ENCODE measurements at regions of chr6 and their contacts with region 1.

Region 1: DNA sequence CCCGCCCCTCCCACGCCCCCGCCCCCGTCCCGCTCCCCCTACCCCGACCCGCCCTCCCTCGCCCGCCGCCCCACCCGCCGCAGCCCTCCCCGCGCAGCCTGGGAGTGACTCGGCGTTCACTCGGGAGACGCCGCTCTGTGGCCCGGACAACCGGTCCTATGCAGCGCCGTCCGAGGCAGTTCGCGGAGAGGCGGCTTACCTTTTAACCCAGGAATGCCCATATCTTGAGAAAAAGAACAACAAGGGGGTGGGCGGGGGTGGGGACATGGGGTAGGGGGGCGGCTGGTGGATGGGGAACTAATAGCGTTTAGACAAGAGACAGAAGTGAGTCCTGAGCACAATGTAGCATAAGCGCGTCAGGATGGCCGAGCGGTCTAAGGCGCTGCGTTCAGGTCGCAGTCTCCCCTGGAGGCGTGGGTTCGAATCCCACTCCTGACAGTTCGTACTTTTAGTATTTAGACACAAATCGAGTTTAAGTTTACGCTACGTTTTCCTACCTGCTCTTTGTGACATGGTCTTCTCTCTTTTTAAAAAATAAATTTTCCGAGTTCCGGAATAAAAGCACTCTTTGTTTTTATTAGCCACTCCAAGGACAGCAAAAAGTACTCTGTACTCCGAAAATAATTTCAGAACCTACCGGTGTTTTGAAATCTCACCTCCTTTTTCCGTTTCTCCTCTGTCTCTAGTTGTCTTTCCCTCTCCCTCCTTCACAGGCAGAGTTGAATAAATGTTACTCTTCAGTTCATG is 17.1 kb upstream of the HMGN4 start:
- DNase-seq: peak; percentile 78
- ATAC-seq: peak; percentile 72
- H3K4me3 Mint-ChIP-seq: peak overlapping the region; percentile 87
- H3K27ac Mint-ChIP-seq: peak overlapping the region; percentile 92
- H3K4me1 Mint-ChIP-seq: peaks cover 43% of the 10 kb centered on the region
- H3K27me3 Mint-ChIP-seq: peaks cover 1% of the 10 kb centered on the region
- CTCF ChIP-seq: no peak

Region 2: GRCh38 chr6:26401987-26402658 is 118.9 kb before region 1 on chr6 and contains the start of gene BTN3A1:
- CTCF ChIA-PET with region 1: no interaction called
- POLR2A ChIA-PET with region 1: no interaction called
- intact Hi-C with region 1: loop called (anchors 5 kb)
- DNase-seq: peak; percentile 43
- ATAC-seq: peak; percentile 87
- H3K4me3 Mint-ChIP-seq: peak within 1 kb of the TSS; percentile 98
- H3K27ac Mint-ChIP-seq: peak within 1 kb of the TSS; percentile 98
- H3K4me1 Mint-ChIP-seq: peaks cover 65% of the 10 kb centered on the region
- H3K27me3 Mint-ChIP-seq: no peaks in the 10 kb centered on the region
- CTCF ChIP-seq: no peak
- total RNA-seq, gene BTN3A1: 55.4 and 61.7 TPM in 2 replicates

Region 3: GRCh38 chr6:26447257-26447656 is 73.8 kb before region 1 on chr6:
- CTCF ChIA-PET with region 1: no interaction called
- POLR2A ChIA-PET with region 1: no interaction called
- intact Hi-C with region 1: no loop called
- DNase-seq: no peak
- ATAC-seq: no peak
- H3K4me3 Mint-ChIP-seq: no peak overlapping the region
- H3K27ac Mint-ChIP-seq: no peak overlapping the region
- H3K4me1 Mint-ChIP-seq: peaks cover 36% of the 10 kb centered on the region
- H3K27me3 Mint-ChIP-seq: no peaks in the 10 kb centered on the region
- CTCF ChIP-seq: no peak

Region 4: DNA sequence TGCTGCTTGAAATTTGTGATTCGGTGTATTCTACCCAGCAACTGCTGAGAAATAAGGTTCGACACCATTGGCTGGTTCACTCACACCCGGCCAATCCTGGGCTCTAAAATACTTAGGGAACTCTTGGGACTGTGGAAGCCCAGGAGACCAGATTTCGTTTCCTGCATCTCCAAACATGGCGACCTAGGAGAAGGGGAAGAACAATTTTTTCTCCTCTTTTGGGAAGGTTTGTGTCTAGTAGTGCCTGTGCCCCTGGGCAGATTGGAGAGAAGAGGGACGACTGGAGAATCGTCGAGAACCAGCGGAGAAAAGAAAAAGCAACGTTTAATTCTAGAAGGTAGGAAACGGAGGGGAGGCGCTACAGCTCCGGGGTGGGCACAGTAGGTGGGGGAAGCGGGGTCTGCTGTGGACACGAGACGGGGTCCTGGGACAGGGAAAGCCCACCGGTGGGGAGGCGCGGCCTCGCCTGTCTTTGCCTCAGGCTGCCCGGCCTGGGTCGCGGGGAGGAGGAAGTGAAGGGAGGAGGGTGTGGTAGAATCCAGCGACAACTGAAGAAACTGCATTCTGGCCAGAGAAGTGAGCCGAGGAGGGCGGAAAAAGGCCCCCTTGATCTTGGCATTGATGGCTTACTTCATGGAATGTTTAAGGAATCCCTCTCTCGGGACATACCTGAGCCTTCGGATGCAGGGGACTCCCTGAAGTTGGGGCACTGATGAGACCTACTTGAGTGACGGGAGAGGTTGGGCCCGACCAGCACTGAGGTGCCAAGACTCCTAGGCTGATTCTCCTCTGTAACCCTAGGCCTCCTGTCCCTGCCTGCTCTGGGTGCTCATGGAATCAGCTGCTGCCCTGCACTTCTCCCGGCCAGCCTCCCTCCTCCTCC is 63.0 kb before region 1 on chr6 and contains the start of gene BTN2A1:
- CTCF ChIA-PET with region 1: no interaction called
- POLR2A ChIA-PET with region 1: no interaction called
- intact Hi-C with region 1: loop called (anchors 1 kb)
- DNase-seq: peak; percentile 49
- ATAC-seq: peak; percentile 98
- H3K4me3 Mint-ChIP-seq: peak within 1 kb of the TSS; percentile 98
- H3K27ac Mint-ChIP-seq: peak within 1 kb of the TSS; percentile 96
- H3K4me1 Mint-ChIP-seq: peaks cover 70% of the 10 kb centered on the region
- H3K27me3 Mint-ChIP-seq: no peaks in the 10 kb centered on the region
- CTCF ChIP-seq: no peak
- total RNA-seq, gene BTN2A1: 39.7 and 45.1 TPM in 2 replicates

Region 5: DNA sequence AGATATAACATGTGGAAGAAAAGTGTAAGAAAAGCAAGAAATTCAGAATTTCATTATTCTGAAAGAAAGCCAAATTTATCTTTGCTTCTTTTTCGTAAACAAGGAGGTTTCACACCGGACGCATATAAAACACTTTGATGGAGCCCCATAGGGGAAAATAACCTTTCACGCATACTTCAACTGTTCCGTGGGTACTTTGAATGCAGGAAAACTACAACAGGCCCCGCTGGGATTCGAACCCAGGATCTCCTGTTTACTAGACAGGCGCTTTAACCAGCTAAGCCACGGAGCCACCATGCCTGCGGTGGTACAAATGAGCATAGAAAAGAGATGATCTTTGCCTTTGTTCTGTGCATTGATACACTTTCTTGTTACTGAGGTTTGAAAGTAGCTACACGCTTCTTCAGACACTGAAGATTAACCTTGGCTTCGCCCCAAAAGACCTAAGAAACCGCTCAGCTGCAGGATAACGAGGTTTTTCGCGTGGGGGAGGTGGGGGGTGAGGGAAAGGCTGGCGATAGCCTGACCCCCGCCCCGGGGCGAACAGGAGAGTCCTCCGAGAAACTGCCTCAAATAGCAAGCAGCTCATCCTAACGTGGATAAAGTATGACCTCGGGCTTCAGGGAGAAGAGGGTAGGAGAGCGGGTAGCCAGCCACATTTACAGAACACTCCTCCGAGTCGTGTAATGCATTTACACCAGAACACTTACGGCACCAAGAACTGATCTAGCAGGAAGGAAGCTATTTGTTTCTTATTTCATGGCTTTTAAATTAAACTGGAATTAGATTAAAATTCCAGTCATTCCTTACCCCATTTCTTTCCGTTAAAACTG is 11.9 kb after region 1 on chr6:
- CTCF ChIA-PET with region 1: interaction called, 9 read pairs
- POLR2A ChIA-PET with region 1: interaction called, 74 read pairs
- intact Hi-C with region 1: loop called (anchors 1 kb)
- DNase-seq: peak; percentile 73
- ATAC-seq: peak; percentile 38
- H3K4me3 Mint-ChIP-seq: peak overlapping the region; percentile 92
- H3K27ac Mint-ChIP-seq: peak overlapping the region; percentile 91
- H3K4me1 Mint-ChIP-seq: peaks cover 47% of the 10 kb centered on the region
- H3K27me3 Mint-ChIP-seq: peaks cover 8% of the 10 kb centered on the region
- CTCF ChIP-seq: no peak

Region 6: GRCh38 chr6:26568601-26569432 is 47.8 kb after region 1 on chr6:
- CTCF ChIA-PET with region 1: interaction called, 3 read pairs
- POLR2A ChIA-PET with region 1: interaction called, 6 read pairs
- intact Hi-C with region 1: loop called (anchors 1 kb)
- DNase-seq: peak; percentile 98
- ATAC-seq: peak; percentile 80
- H3K4me3 Mint-ChIP-seq: peak overlapping the region; percentile 96
- H3K27ac Mint-ChIP-seq: peak overlapping the region; percentile 98
- H3K4me1 Mint-ChIP-seq: peaks cover 26% of the 10 kb centered on the region
- H3K27me3 Mint-ChIP-seq: peaks cover 3% of the 10 kb centered on the region
- CTCF ChIP-seq: no peak

Measured in activated B cell treated with CpG ODN at 0.5 μM for 24 hours (primary cell).